ENCODE measurements at regions of chr10 and their contacts with region 1.

Region 1: GRCh38 chr10:21989453-21990154 is 13.9 kb downstream of the DNAJC1 start:
- DNase-seq: no peak
- ATAC-seq: peak; percentile 60 to 73
- H3K4me3 ChIP-seq: no peak overlapping the region
- H3K27ac ChIP-seq: no peak overlapping the region
- H3K4me1 ChIP-seq: no peaks in the 10 kb centered on the region
- H3K27me3 ChIP-seq: no peaks in the 10 kb centered on the region
- CTCF ChIP-seq: peak in 4 of 5 experiments; percentile 9 to 57 (median 33)
- POLR2A ChIP-seq: no peak

Region 2: DNA sequence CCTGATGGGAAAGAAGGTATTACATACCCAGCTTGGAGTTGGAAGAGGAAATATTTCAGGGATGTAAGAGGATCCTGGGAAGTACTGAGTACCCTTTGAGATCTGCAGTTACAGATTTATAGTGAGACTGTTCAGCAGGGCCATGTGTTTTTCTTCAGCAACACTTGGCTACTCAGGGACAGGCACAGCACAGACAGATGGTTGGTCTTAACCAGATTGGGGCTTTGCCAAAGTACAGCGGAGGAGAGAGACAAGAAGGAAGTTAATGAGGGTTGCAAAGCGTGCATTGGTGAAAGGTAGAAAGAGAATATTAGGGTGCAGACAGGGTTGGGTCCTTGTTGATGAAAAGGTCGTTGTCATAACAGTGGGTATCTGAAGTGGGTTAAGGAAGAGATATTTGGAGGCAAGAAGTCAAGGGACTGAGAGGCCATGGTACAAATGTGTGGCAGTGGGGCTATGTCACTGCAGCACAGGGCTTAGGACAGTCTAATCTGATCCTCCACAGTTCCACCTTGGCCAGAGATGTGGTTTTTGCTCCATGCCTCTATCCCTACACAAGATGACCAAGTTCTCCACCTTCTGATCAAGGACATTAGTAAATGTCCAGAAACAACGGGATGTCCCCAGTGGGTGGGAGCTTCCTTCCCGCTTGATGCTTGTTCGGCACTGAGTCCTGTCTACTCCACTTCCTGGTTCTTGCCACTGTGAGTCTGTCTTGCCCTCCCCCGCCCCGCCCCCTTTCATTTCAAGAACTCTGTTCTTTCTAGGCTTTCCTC is 32.8 kb after region 1 on chr10:
- in situ Hi-C with region 1: no loop called
- intact Hi-C with region 1: no loop called
- DNase-seq: peak in 1 of 2 donors; percentile 15
- ATAC-seq: no peak
- H3K4me3 ChIP-seq: no peak overlapping the region
- H3K27ac ChIP-seq: no peak overlapping the region
- H3K4me1 ChIP-seq: no peaks in the 10 kb centered on the region
- H3K27me3 ChIP-seq: no peaks in the 10 kb centered on the region
- CTCF ChIP-seq: no peak
- POLR2A ChIP-seq: no peak

Region 3: GRCh38 chr10:22218451-22218850 is 228.8 kb after region 1 on chr10:
- in situ Hi-C with region 1: loop called in 1 of 4 experiments (anchors 25 kb)
- intact Hi-C with region 1: no loop called
- DNase-seq: no peak
- ATAC-seq: no peak
- H3K4me3 ChIP-seq: no peak overlapping the region
- H3K27ac ChIP-seq: no peak overlapping the region
- H3K4me1 ChIP-seq: no peaks in the 10 kb centered on the region
- H3K27me3 ChIP-seq: no peaks in the 10 kb centered on the region
- CTCF ChIP-seq: no peak
- POLR2A ChIP-seq: no peak

Region 4: DNA sequence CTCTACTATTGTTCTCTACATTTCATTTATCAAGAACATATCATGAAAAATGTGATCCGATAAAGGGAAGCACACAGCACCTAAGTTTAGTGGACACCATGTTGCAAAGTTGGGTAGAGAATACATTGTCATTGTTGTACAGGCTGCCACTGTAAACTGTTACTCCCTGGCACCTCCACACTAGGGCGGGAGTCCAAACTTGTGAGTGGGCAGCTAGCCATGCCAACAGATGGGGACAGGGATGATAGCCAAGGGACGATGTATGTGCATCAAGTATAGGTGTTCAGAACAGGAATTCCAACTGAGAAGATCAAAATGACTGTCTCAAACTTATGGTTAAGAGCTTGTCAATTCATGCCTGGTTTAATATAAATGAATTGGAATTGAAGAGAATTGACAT is 295.5 kb after region 1 on chr10:
- in situ Hi-C with region 1: no loop called
- intact Hi-C with region 1: no loop called
- DNase-seq: no peak
- ATAC-seq: no peak
- H3K4me3 ChIP-seq: no peak overlapping the region
- H3K27ac ChIP-seq: no peak overlapping the region
- H3K4me1 ChIP-seq: no peaks in the 10 kb centered on the region
- H3K27me3 ChIP-seq: peaks cover 0 to 7% (median 0%) of the 10 kb centered on the region in 3 donors
- CTCF ChIP-seq: no peak
- POLR2A ChIP-seq: no peak

Region 5: DNA sequence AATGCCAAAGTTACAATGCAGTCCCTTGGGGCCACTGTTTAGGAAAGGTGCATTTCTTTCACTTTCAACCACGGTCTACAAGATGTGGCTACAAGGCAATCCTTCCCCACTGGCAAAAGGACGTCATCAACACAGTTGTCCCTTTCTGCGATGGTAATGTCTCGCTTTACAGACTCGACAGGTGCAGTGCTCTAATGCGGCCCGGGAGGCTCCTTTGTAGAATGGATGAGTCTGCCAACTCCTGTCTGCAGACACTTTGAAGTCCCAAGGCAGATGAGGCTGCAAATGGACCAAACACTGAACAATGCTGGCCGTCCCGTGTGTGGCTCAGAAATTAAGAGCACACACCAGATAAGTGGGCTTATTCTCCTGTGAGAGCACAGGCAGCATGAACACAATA is 591.1 kb after region 1 on chr10:
- in situ Hi-C with region 1: loop called in 2 of 4 experiments (anchors 10 to 25 kb)
- intact Hi-C with region 1: loop called (anchors 5 kb)
- DNase-seq: no peak
- ATAC-seq: peak in 1 of 2 donors; percentile 53
- H3K4me3 ChIP-seq: no peak overlapping the region
- H3K27ac ChIP-seq: no peak overlapping the region
- H3K4me1 ChIP-seq: no peaks in the 10 kb centered on the region
- H3K27me3 ChIP-seq: no peaks in the 10 kb centered on the region
- CTCF ChIP-seq: no peak
- POLR2A ChIP-seq: no peak

Region 6: GRCh38 chr10:22597138-22597537 is 607.5 kb after region 1 on chr10:
- in situ Hi-C with region 1: loop called in 1 of 4 experiments (anchors 25 kb)
- intact Hi-C with region 1: no loop called
- DNase-seq: no peak
- ATAC-seq: no peak
- H3K4me3 ChIP-seq: no peak overlapping the region
- H3K27ac ChIP-seq: no peak overlapping the region
- H3K4me1 ChIP-seq: no peaks in the 10 kb centered on the region
- H3K27me3 ChIP-seq: no peaks in the 10 kb centered on the region
- CTCF ChIP-seq: no peak
- POLR2A ChIP-seq: no peak

Region 7: DNA sequence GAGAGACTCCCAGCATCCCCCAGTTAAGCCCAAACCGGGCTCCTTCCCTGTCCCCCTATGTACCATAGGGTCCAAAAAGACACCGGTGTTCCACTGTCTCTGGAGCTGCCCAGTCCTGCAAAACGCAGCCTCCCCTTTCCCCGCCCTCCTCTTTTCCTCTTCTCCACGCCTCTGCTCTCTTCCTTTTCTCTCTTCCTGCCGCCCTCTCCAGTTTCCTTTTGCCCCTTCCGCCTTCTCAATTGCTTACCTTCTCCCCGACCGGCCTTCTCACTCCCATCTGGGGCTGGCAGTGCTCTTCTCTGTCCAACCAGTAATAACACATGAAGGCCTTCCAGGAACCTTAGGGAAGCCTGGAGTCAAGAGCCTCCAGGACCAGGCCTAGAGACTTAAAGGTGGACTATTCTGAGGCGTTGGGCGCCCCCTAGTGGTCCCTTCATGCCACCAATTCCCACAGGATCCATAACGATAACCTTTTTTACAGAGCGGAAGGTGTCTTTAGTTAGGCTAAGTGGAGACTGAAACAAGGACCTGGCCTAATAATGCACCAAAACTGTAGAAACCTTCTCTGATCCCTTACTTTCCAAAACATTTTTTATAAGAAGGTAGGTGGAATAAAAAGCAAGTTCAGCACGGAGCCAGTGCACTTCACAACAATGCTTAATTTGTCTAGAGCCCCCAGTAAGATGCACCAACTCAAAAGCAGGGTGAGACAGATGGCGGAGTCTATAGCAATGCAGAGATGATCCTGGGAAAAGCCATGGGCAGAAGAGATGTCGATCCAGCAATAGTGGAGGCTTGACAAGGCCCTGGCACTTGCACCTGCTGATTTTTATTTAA is 1078.6 kb after region 1 on chr10:
- in situ Hi-C with region 1: no loop called
- intact Hi-C with region 1: loop called (anchors 2 kb)
- DNase-seq: peak; percentile 20 to 46
- ATAC-seq: peak; percentile 49 to 62
- H3K4me3 ChIP-seq: no peak overlapping the region
- H3K27ac ChIP-seq: no peak overlapping the region
- H3K4me1 ChIP-seq: peaks cover 22 to 32% of the 10 kb centered on the region in 2 donors
- H3K27me3 ChIP-seq: no peaks in the 10 kb centered on the region
- CTCF ChIP-seq: peak in 4 of 5 experiments; percentile 60 to 82 (median 70)
- POLR2A ChIP-seq: no peak